Left ventricle myocardium superior (tissue), 1 donor: ENCODE measurements at regions of chr6 and their contacts with region 1.

Region 1: DNA sequence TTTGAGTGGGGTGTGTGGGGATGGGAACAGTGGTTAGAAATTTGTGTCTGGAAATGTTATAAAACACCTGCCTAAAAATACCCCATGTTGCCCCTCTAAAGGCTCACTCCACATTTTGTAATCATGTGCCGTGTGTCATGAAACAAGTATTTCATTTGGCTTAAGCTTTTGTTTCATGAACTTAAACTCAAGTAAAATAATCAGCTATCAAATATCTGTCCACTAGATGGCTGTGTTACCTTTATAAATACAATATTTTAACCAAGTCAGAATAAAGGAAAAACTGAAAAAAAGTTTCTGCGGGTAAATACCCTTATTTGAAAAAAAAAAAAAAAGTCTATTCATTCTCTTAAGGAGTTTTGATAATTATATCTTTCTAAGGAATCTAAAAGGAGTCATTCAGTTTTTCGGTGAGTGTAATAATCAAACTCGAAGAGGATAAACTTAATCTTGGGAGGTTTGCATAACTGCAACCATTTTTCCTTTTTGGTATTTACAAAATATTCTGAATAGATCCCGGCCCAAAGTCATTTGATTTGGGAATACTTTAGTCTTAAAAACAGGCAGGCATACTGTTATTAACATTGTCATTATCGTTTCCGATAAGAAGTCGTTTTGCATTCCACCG is 29.9 kb upstream of the MTRF1L start:
- DNase-seq: no peak
- ATAC-seq: no peak

Region 2: DNA sequence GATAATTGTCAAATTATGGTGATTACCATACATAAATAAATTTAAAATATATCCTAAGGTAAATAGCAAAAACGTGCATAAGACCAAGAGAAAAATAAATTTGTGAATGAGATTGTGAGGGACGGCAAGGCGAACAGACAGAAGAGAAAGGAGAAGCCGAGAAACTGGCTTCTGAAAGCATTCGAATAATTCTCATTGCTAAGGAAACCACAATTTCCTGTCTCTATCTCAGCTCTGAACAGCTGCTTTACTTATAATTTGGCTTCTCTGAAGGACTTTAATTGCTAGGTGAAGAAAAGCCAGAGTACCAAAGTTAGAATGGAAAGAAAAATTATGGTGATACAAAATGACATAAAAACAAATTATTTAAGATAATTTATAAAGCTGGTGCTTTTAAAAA is 177.7 kb after region 1 on chr6:
- intact Hi-C with region 1: no loop called
- DNase-seq: no peak
- ATAC-seq: peak; percentile 47

Region 3: DNA sequence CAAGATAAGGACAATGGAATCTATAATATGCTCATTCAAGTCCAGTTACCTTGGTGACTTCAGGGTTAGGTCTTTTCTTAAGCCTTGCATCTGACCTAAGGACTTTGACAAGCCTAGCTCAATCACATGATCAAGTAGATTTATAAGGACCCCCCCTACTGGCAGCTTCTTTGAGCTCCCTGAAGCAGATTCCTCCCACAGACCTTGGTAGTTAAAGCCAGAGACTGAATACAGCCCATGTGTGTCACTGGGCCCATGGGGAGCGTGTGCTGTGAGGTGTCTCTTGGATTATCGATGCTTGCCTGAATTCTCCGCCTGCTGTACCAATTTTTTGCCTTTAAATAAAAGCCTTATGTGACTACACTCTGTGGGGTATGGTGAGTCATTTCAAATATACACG is 471.4 kb after region 1 on chr6:
- intact Hi-C with region 1: loop called (anchors 10 kb)
- DNase-seq: no peak
- ATAC-seq: no peak